Adrenal gland (tissue), 19 donors: ENCODE measurements at regions of chr12 and their contacts with region 1.

Region 1: DNA sequence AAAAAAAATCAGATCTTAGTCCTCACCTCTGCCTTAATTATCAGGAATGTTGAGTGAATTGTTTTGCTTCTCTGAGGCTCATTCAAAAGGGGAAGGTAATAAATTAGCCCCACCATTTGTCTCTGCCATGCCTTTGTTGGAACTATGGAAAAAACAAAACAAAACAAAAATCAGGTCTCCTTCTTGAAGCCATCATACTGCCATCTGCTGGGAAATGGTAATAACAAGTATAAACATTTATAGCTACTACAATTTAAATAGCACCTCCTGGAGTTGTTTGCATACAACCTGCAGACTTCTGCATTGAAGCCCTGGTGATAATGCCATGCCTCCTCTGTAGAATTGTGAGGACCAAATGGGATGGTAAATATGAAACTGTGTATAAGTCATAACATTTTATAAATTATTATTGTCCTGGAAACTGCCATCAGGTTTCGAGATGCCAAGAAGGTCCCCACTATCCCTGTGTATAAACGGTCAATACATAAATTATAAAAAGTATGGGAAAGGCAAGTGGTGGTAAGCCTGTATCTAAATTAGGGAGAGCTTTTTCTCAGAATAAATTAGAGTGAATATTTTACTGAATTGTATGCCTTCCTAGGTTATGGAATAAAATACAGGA is 87.2 kb upstream of the FGD4 start:
- DNase-seq: no peak
- H3K4me3 ChIP-seq: no peak overlapping the region
- H3K27ac ChIP-seq: no peak overlapping the region
- H3K4me1 ChIP-seq: no peaks in the 10 kb centered on the region
- H3K27me3 ChIP-seq: no peaks in the 10 kb centered on the region
- CTCF ChIP-seq: peak; percentile 33 to 74 (median 58)
- POLR2A ChIP-seq: no peak

Region 2: DNA sequence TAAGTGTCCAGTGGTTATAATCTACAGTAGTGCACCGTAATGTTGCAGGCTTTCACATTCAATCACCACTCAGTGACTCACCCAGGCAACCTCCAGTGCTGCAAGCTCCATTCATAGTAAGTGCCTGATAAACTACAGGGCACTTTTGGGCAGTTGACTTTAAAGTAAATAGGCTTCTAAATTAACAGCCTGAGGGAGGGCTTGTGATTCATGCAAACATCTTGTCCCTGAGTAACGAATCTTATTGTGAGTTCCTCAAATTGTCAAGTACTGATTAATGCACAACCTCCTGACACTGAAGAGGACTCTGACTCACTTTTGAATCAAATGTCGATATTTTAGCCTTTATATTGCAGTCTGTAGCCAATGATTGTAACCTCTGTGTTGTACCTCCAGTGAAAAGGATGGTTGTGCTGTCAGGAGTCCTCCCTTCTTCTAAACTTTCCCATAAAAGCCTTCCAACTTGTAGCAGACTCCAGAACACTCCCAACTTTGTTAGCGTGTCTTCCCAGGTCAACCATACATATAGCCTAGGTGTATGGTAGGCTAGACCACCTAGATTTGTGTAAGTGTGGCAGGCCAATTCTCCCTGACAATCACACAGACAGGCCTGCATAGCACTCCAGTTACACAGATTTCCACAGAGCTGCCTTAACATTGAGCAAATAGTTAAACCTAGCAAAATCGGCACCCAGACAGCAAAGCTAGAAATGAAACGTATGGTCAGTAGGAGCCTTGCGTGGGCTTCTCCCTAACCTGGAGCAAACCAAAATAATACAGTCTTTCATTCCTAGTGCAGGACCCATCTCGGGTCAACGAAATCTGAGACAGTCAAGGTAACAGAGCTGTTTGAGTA is 260.4 kb before region 1 on chr12:
- intact Hi-C with region 1: loop called in 1 of 2 experiments (anchors 5 kb)
- DNase-seq: peak; percentile 20 to 57 (median 31)
- H3K4me3 ChIP-seq: no peak overlapping the region
- H3K27ac ChIP-seq: no peak overlapping the region
- H3K4me1 ChIP-seq: no peaks in the 10 kb centered on the region
- H3K27me3 ChIP-seq: no peaks in the 10 kb centered on the region
- CTCF ChIP-seq: no peak
- POLR2A ChIP-seq: no peak

Region 3: DNA sequence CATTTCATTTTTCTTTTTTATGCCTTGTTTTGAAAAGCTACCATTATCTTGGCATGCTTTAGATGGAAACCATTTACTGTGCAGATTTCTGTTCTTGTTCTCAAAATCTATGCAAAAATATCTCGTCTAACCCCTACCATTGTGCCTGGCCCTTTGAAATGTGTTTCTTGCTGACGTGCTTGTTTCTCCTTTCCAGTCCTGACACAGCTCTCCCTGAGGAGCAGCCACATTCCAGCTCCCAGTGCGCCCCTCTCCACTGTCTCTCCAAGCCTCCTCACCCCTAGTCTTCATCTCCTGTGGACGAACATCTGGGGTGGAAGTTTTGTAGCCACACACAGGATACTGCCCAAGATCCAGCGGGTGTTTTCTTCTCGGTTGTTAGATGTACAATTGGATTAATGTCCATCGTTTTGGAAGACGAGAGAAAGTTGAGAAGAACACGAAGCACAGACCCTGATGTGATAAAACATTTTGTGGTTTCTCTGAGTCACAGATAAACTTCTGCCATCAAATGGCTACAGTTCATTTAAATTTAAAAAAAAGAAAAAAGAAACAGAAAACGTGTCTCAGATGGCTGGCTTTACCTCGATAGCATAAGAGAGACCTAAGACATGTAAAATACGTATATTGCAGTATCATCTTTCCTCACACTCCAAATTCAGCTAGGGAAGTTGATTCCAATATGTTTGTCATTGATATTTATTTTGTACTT is 65.3 kb after region 1 on chr12:
- intact Hi-C with region 1: no loop called
- DNase-seq: no peak
- H3K4me3 ChIP-seq: no peak overlapping the region
- H3K27ac ChIP-seq: no peak overlapping the region
- H3K4me1 ChIP-seq: no peaks in the 10 kb centered on the region
- H3K27me3 ChIP-seq: no peaks in the 10 kb centered on the region
- CTCF ChIP-seq: no peak
- POLR2A ChIP-seq: no peak